ENCODE measurements at regions of chr6 and their contacts with region 1.

Region 1: DNA sequence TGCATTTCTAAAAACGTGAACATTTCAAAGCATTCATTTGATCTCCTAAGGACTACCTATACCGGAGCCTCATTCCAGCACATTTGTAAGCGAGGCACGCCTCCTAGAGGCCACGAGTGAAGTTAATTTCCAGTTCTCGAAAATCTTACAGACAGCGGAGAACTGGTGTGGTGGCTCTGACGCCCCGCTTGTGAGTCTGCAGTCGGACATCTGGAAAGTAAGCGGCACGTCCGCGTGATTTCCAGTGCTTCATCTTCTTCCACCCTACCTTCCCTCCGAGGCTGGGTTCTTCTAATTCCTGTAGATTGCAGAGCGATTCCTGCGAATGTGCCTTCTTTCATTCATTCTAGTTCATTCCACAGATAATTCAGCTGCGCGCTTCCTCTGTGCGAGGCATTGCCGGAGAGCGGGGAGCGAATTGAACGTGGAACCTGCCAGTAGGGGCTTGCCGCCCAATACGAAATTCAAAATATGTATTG is 810 bp upstream of the PRIM2 start:
- DNase-seq: peak; percentile 95
- H3K4me3 Mint-ChIP-seq: peak overlapping the region; percentile 99
- H3K27ac Mint-ChIP-seq: peak overlapping the region; percentile 93
- H3K4me1 Mint-ChIP-seq: peaks cover 26% of the 10 kb centered on the region
- H3K27me3 Mint-ChIP-seq: peaks cover 4% of the 10 kb centered on the region

Region 2: GRCh38 chr6:56451165-56451739 is 865.4 kb before region 1 on chr6:
- intact Hi-C with region 1: no loop called
- DNase-seq: no peak
- H3K4me3 Mint-ChIP-seq: no peak overlapping the region
- H3K27ac Mint-ChIP-seq: no peak overlapping the region
- H3K4me1 Mint-ChIP-seq: no peaks in the 10 kb centered on the region
- H3K27me3 Mint-ChIP-seq: no peaks in the 10 kb centered on the region

Region 3: GRCh38 chr6:56843573-56844349 is 472.9 kb before region 1 on chr6:
- intact Hi-C with region 1: loop called (anchors 2 kb)
- DNase-seq: peak; percentile 88
- H3K4me3 Mint-ChIP-seq: peak overlapping the region; percentile 81
- H3K27ac Mint-ChIP-seq: peak overlapping the region; percentile 17
- H3K4me1 Mint-ChIP-seq: peaks cover 6% of the 10 kb centered on the region
- H3K27me3 Mint-ChIP-seq: peaks cover 47% of the 10 kb centered on the region

Region 4: DNA sequence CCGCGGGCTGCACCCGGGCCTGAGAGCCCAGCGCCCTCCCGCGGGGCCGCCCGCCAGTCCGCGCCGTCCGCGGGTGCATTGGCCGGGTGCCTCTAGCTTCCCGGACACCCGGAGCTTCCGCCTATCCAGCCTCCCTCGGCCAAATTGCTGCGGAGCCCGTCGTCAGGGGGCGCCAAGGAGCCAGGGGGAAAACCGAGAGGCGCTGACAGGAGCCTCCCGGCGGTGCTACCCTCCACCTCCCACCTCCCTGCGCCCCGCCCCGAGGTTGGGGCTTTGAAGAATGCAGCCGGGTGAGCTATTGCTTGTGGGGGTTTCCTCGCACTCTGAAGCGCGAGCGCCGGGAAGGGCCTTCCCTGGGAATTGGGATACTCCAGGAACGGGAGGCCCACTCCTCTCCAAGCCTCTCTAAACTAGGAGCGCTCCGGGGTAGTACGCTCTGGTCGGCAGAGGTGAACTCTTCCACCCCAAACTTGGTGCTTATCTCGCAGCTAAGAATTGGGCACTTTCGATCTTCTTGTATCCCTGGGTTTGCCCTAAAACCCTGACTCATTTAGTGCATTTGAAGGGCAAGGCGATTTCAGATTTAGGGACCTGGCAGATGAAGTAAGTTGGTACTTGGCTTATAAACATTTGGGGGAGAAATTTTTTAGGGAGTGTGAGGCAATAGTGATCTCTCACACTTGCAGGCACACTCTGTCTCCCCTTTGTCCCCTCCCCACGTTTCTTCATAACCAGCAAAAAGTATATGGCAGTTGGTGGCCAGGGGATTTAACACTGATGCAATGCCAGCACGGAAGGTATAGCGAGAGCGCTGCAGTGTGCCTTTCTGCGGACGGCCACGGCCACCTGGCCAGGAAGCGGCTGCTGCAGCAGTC is 361.2 kb before region 1 on chr6:
- intact Hi-C with region 1: loop called (anchors 1 kb)
- DNase-seq: peak; percentile 90
- H3K4me3 Mint-ChIP-seq: peak overlapping the region; percentile 86
- H3K27ac Mint-ChIP-seq: peak overlapping the region; percentile 17
- H3K4me1 Mint-ChIP-seq: peaks cover 15% of the 10 kb centered on the region
- H3K27me3 Mint-ChIP-seq: peaks cover 62% of the 10 kb centered on the region

Region 5: GRCh38 chr6:57035549-57035948 is 281.1 kb before region 1 on chr6:
- intact Hi-C with region 1: no loop called
- DNase-seq: no peak
- H3K4me3 Mint-ChIP-seq: no peak overlapping the region
- H3K27ac Mint-ChIP-seq: no peak overlapping the region
- H3K4me1 Mint-ChIP-seq: no peaks in the 10 kb centered on the region
- H3K27me3 Mint-ChIP-seq: peaks cover 38% of the 10 kb centered on the region

Region 6: DNA sequence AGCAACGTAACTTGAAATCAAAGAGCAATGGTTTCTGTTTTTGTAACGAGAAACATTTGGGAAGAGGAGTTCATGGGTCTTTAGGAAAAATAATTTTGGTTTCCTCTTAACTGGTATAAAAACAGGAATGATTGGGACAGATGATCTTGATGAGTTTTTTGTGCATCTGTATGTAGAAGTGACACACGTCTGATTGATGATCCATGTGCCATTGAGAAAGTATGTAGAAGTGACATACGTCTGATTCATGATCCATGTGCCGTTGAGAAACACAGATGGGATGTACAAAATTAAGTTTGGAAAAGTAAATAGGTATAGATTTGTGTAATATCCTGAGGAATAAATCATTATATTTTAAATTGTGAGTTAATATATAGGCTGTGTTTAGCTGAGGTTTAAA is 268.0 kb before region 1 on chr6:
- intact Hi-C with region 1: loop called (anchors 2 kb)
- DNase-seq: no peak
- H3K4me3 Mint-ChIP-seq: peak overlapping the region; percentile 81
- H3K27ac Mint-ChIP-seq: no peak overlapping the region
- H3K4me1 Mint-ChIP-seq: peaks cover 21% of the 10 kb centered on the region
- H3K27me3 Mint-ChIP-seq: peaks cover 22% of the 10 kb centered on the region

Region 7: GRCh38 chr6:57172136-57173055 is 144.2 kb before region 1 on chr6 and contains the start of gene BAG2:
- intact Hi-C with region 1: loop called (anchors 1 kb)
- DNase-seq: peak; percentile 97
- H3K4me3 Mint-ChIP-seq: peak within 1 kb of the TSS; percentile 89
- H3K27ac Mint-ChIP-seq: peak within 1 kb of the TSS; percentile 93
- H3K4me1 Mint-ChIP-seq: peaks cover 24% of the 10 kb centered on the region
- H3K27me3 Mint-ChIP-seq: no peaks in the 10 kb centered on the region
- total RNA-seq, gene BAG2: 13.1 and 13.2 TPM in 2 replicates

Region 8: GRCh38 chr6:57267586-57268293 is 48.9 kb before region 1 on chr6:
- intact Hi-C with region 1: loop called (anchors 1 kb)
- DNase-seq: peak; percentile 65
- H3K4me3 Mint-ChIP-seq: no peak overlapping the region
- H3K27ac Mint-ChIP-seq: no peak overlapping the region
- H3K4me1 Mint-ChIP-seq: no peaks in the 10 kb centered on the region
- H3K27me3 Mint-ChIP-seq: no peaks in the 10 kb centered on the region

Region 9: GRCh38 chr6:57329933-57330332 is 13.3 kb after region 1 on chr6:
- intact Hi-C with region 1: no loop called
- DNase-seq: no peak
- H3K4me3 Mint-ChIP-seq: no peak overlapping the region
- H3K27ac Mint-ChIP-seq: no peak overlapping the region
- H3K4me1 Mint-ChIP-seq: peaks cover 2% of the 10 kb centered on the region
- H3K27me3 Mint-ChIP-seq: no peaks in the 10 kb centered on the region